Ovary (tissue), 10 donors: ENCODE measurements at regions of chr12 and their contacts with region 1.

Region 1: GRCh38 chr12:53198486-53199110 is 8.5 kb downstream of the ITGB7 start:
- DNase-seq: no peak
- H3K4me3 ChIP-seq: no peak overlapping the region
- H3K27ac ChIP-seq: no peak overlapping the region
- H3K4me1 ChIP-seq: peaks cover 9% of the 10 kb centered on the region
- H3K27me3 ChIP-seq: no peaks in the 10 kb centered on the region
- CTCF ChIP-seq: no peak
- EP300 ChIP-seq: no peak
- POLR2A ChIP-seq: no peak

Region 2: DNA sequence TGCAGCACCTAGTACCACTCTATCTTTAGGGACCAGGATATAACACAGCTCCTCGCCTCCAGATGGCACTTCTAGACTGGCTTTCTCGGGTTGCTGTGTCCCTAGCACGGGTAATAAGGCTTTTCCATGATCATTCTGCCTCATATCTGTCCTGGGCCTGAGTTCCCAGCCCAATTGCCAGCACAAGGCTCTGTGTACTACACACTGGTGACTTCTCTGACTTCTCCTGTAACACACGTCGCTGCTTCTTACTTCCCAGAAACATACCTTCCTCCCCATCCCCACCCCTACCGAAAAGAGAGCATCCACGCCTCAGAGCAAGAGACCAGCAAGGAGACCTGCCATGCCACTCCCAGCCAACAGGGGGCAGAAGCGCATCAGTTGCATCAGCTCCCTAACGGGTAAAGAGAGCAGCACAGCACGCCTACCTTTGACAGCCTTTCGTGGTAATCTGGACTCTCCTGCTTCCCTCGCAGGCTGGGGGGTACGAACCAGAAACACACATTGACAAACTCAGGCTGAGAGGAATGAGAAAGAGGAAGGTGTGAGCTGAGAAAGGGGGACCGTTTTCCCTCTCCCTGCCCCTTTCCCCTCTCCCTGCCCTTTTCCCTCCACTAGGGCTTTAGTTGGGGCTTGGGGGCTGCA is 39.3 kb before region 1 on chr12:
- intact Hi-C with region 1: loop called in 3 of 4 experiments (anchors 5 kb)
- DNase-seq: peak; percentile 67 to 88 (median 83)
- H3K4me3 ChIP-seq: no peak overlapping the region
- H3K27ac ChIP-seq: no peak overlapping the region
- H3K4me1 ChIP-seq: no peaks in the 10 kb centered on the region
- H3K27me3 ChIP-seq: no peaks in the 10 kb centered on the region
- CTCF ChIP-seq: peak; percentile 76 to 90 (median 89)
- EP300 ChIP-seq: no peak
- POLR2A ChIP-seq: no peak

Region 3: GRCh38 chr12:53251477-53252348 is 53.1 kb after region 1 on chr12:
- intact Hi-C with region 1: no loop called
- DNase-seq: peak; percentile 73 to 87 (median 83)
- H3K4me3 ChIP-seq: peak overlapping the region; percentile 76
- H3K27ac ChIP-seq: peak overlapping the region; percentile 60 to 74
- H3K4me1 ChIP-seq: peaks cover 3% of the 10 kb centered on the region
- H3K27me3 ChIP-seq: no peaks in the 10 kb centered on the region
- CTCF ChIP-seq: peak in 2 of 3 donors; percentile 20 to 38
- EP300 ChIP-seq: no peak
- POLR2A ChIP-seq: peak; percentile 24

Region 4: DNA sequence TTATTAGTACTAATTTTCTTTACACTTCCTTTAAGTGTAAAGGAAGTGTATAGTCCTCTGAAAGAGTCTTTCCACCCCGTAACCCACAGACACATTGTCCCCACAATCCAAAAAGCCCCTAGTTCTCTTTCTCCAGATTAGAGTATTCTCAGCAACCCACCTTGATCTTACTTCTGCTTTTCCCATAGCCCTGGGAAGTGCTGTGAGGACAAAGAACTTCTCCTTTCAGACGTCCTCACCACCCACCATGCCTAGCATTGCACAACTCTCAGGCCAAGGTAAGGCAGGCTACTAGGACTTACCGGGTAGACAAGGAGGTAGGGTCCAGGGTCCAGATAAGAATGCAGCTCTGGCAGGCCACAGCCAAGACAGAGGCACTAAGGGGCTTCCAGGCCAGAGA is 115.4 kb after region 1 on chr12:
- intact Hi-C with region 1: no loop called
- DNase-seq: no peak
- H3K4me3 ChIP-seq: no peak overlapping the region
- H3K27ac ChIP-seq: no peak overlapping the region
- H3K4me1 ChIP-seq: no peaks in the 10 kb centered on the region
- H3K27me3 ChIP-seq: no peaks in the 10 kb centered on the region
- CTCF ChIP-seq: no peak
- EP300 ChIP-seq: no peak
- POLR2A ChIP-seq: no peak

Region 5: DNA sequence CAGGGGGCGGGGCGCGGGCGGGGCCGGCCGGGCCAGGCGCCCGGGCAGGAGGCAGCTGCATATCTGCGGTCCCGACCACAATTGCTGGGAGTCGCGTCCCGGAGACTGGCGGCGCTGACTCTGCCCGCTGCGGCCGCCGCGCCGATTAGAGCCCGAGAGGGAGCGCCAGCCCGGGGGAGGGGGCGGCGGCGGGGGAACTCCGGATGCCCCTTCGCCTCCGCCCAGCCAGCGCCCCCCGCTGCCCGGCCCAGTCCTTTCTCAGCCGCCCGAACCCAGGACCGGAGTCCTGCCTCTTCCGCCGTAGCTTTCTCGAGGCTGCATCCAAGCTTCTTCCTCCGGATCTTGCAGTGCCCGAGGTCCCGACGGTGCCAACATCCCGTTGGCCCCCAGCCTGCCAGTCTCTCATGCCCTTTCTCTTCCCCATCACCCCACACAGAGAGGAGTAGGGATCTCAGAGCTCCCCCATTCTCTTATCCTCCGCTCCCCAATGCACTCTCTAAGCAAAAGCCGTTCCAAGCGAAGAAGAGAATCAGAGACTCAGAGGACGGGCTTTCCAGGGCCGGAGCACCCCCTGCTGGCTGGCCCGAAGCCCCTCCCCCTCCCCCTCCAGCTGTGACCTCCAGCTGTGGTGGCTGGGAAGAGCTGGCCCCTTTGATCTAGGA is 146.4 kb after region 1 on chr12:
- intact Hi-C with region 1: no loop called
- DNase-seq: peak; percentile 80 to 88 (median 85)
- H3K4me3 ChIP-seq: peak overlapping the region; percentile 50
- H3K27ac ChIP-seq: peak overlapping the region; percentile 46 to 73
- H3K4me1 ChIP-seq: peaks cover 3% of the 10 kb centered on the region
- H3K27me3 ChIP-seq: no peaks in the 10 kb centered on the region
- CTCF ChIP-seq: peak; percentile 74 to 83 (median 76)
- EP300 ChIP-seq: no peak
- POLR2A ChIP-seq: no peak